Activated CD4-positive, alpha-beta T cell treated with anti-CD3 and anti-CD28 coated beads for 36 hours (primary cell): ENCODE measurements at regions of chr4 and their contacts with region 1.

Region 1: GRCh38 chr4:173334085-173334772 is at the start of gene HMGB2:
- DNase-seq: peak; percentile 100
- ATAC-seq: peak; percentile 95
- H3K4me3 Mint-ChIP-seq: peak within 1 kb of the TSS; percentile 98
- H3K27ac Mint-ChIP-seq: peak within 1 kb of the TSS; percentile 99
- H3K4me1 Mint-ChIP-seq: peaks cover 14% of the 10 kb centered on the region
- H3K27me3 Mint-ChIP-seq: peaks cover 7% of the 10 kb centered on the region
- total RNA-seq, gene HMGB2: 608 to 661 TPM

Region 2: DNA sequence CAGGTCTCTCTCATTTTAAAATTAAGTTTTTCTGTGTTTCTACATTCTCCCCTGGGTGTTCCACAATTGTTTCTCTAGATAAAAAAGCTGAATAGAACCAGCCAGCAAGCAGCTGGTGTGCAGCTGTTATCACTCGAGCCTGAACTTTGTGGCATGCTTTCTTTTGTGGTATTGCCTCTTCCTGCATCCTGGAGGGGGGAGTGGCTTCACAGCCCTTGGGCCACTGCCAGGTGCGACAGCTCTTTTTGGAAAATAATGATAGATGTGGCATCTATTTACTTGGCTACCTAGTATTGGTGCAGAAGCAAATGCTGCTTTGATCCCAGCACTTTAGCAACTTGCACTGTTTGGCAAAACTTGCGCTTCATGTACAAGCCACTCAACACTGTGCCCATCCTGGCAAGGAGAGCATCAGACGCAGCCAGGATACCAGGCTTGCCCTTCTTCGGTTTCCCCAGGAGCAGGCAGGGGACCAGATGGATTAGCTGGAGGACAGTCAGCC is 69.5 kb before region 1 on chr4:
- CTCF ChIA-PET with region 1: no interaction called
- POLR2A ChIA-PET with region 1: no interaction called
- intact Hi-C with region 1: no loop called
- DNase-seq: peak; percentile 34
- ATAC-seq: peak; percentile 57
- H3K4me3 Mint-ChIP-seq: peak overlapping the region; percentile 51
- H3K27ac Mint-ChIP-seq: no peak overlapping the region
- H3K4me1 Mint-ChIP-seq: peaks cover 24% of the 10 kb centered on the region
- H3K27me3 Mint-ChIP-seq: no peaks in the 10 kb centered on the region

Region 3: DNA sequence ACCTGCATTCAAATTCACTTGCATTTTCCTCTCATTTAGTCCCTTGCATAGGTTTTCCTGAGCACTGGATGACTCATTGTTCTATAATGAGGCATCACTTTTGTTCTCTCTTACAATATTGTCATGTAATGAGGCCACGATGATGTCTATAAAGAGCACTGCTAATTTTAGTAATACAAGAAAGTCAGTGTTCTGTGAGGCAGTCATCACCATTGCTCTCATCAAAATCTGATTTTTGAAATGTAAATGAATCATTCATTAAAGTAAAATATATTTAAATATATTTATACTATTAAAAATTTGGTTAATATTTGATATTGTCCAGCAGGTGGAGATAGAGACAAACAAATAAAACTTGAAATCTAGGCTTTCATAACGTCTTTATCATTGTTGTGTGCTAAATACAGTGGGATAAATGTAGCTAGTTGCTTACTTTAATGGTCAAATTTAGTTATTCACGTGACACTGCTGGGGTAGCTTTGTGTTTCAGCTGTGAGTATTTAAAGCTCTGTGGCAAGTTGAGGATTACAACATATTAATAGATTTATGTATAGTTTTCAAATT is 15.5 kb before region 1 on chr4:
- CTCF ChIA-PET with region 1: interaction called, 50 read pairs
- POLR2A ChIA-PET with region 1: interaction called, 7 read pairs
- intact Hi-C with region 1: no loop called
- DNase-seq: no peak
- ATAC-seq: peak; percentile 88
- H3K4me3 Mint-ChIP-seq: no peak overlapping the region
- H3K27ac Mint-ChIP-seq: no peak overlapping the region
- H3K4me1 Mint-ChIP-seq: peaks cover 11% of the 10 kb centered on the region
- H3K27me3 Mint-ChIP-seq: no peaks in the 10 kb centered on the region

Region 4: DNA sequence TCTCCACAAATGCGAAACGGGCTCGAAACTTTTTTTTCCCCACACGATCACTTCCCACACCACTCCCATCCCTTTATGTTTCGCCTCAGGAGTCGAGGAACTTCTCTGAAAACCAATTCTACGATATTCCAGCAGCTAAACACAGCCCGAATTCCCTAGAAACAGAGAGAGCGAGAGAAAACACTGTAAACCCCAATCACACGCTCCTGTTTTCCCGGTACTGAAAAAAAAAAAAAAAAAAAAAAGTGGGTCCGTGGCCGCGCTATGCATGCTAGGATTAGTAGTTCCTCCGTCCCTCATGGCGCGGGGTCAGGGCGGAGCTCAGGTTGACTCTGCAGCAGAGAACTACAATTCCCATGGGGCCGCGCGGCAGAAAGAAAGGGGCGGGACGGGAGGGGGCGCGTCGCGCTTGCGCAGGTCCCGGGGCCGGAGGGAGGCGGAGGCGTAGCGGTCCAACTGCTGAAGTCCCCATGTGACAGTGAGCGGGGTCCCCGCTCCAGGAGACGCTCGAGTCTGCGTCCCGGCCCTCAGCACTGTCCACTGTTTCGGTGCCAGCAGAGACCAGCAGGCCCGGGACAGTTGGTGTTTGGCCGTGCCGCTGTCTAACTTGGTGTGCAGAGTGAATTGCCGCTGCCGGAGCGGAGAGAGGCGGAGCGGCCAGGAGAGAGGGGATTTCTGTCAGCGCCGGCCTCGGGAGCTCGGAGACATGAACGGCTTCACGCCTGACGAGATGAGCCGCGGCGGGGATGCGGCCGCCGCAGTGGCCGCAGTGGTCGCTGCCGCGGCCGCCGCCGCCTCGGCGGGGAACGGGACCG is 36.5 kb after region 1 on chr4 and contains the start of gene SAP30:
- CTCF ChIA-PET with region 1: interaction called, 15 read pairs
- POLR2A ChIA-PET with region 1: interaction called, 107 read pairs
- intact Hi-C with region 1: loop called (anchors 1 kb)
- DNase-seq: peak; percentile 99
- ATAC-seq: peak; percentile 88
- H3K4me3 Mint-ChIP-seq: peak within 1 kb of the TSS; percentile 93
- H3K27ac Mint-ChIP-seq: peak within 1 kb of the TSS; percentile 100
- H3K4me1 Mint-ChIP-seq: peaks cover 31% of the 10 kb centered on the region
- H3K27me3 Mint-ChIP-seq: peaks cover 8% of the 10 kb centered on the region
- total RNA-seq, gene SAP30: 22.0 to 29.3 TPM

Region 5: GRCh38 chr4:173494013-173494970 is 160.1 kb after region 1 on chr4:
- CTCF ChIA-PET with region 1: interaction called, 3 read pairs
- POLR2A ChIA-PET with region 1: interaction called, 8 read pairs
- intact Hi-C with region 1: loop called in 1 of 2 experiments (anchors 5 kb)
- DNase-seq: peak; percentile 79
- ATAC-seq: peak; percentile 97
- H3K4me3 Mint-ChIP-seq: peak overlapping the region; percentile 69
- H3K27ac Mint-ChIP-seq: peak overlapping the region; percentile 17
- H3K4me1 Mint-ChIP-seq: peaks cover 10% of the 10 kb centered on the region
- H3K27me3 Mint-ChIP-seq: peaks cover 33% of the 10 kb centered on the region

Region 6: GRCh38 chr4:174282836-174283506 is 948.7 kb after region 1 on chr4:
- CTCF ChIA-PET with region 1: no interaction called
- POLR2A ChIA-PET with region 1: interaction called, 3 read pairs
- intact Hi-C with region 1: loop called (anchors 2 to 5 kb)
- DNase-seq: peak; percentile 84
- ATAC-seq: peak; percentile 97
- H3K4me3 Mint-ChIP-seq: peak overlapping the region; percentile 98
- H3K27ac Mint-ChIP-seq: peak overlapping the region; percentile 100
- H3K4me1 Mint-ChIP-seq: peaks cover 64% of the 10 kb centered on the region
- H3K27me3 Mint-ChIP-seq: no peaks in the 10 kb centered on the region